ENCODE measurements at regions of chr14 and their contacts with region 1.

Region 1: GRCh38 chr14:74551431-74552371 is 58.1 kb downstream of the ISCA2 start:
- DNase-seq: no peak
- H3K4me3 ChIP-seq: no peak overlapping the region
- H3K27ac ChIP-seq: no peak overlapping the region
- H3K4me1 ChIP-seq: peaks cover 2% of the 10 kb centered on the region
- CTCF ChIP-seq: no peak

Region 2: DNA sequence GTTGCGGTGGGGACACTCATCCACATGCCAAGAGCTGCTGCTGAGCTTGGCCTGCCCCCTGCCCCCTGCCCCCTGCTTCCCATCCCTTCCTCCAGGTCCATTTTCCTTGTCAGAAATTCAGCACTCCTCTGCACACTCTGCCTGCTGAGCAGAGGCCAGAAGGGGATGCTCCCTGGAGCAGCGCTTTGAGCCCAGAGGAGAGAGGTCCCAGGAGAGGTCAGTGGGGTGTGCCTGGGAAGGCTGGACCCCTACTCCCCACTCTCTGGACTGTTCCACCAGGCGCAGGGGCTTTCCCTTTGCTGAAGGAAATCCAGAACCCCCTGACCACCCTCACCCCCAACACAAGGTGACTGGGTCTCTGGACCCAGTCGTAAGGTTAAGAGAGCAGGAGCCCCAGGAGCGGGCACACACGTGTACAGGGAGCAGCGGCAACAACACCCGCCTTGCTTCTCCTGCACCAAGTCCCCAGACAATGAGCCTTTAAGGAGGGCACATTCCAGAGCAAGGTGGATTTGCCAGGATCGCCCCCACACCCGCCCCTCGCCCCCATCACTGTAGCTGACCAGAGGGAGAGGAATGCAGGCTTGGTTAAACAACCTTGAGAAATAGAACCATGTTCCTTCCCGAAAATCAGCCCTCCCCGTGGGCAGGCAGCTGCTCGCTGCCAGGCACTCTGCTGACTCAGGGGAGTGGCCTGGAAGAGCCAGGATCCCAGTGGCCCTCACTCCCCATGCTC is 27.5 kb before region 1 on chr14:
- CTCF ChIA-PET with region 1: interaction called, 11 read pairs
- POLR2A ChIA-PET with region 1: no interaction called
- intact Hi-C with region 1: no loop called
- DNase-seq: no peak
- H3K4me3 ChIP-seq: no peak overlapping the region
- H3K27ac ChIP-seq: no peak overlapping the region
- H3K4me1 ChIP-seq: peaks cover 21% of the 10 kb centered on the region
- CTCF ChIP-seq: no peak

Region 3: GRCh38 chr14:74697543-74697942 is 145.8 kb after region 1 on chr14:
- CTCF ChIA-PET with region 1: no interaction called
- POLR2A ChIA-PET with region 1: no interaction called
- intact Hi-C with region 1: no loop called
- DNase-seq: no peak
- H3K4me3 ChIP-seq: no peak overlapping the region
- H3K27ac ChIP-seq: no peak overlapping the region
- H3K4me1 ChIP-seq: no peaks in the 10 kb centered on the region
- CTCF ChIP-seq: no peak

Measured in OCI-LY7 (cell line).